Naive thymus-derived CD8-positive, alpha-beta T cell (primary cell): ENCODE measurements at regions of chr1 and their contacts with region 1.

Region 1: DNA sequence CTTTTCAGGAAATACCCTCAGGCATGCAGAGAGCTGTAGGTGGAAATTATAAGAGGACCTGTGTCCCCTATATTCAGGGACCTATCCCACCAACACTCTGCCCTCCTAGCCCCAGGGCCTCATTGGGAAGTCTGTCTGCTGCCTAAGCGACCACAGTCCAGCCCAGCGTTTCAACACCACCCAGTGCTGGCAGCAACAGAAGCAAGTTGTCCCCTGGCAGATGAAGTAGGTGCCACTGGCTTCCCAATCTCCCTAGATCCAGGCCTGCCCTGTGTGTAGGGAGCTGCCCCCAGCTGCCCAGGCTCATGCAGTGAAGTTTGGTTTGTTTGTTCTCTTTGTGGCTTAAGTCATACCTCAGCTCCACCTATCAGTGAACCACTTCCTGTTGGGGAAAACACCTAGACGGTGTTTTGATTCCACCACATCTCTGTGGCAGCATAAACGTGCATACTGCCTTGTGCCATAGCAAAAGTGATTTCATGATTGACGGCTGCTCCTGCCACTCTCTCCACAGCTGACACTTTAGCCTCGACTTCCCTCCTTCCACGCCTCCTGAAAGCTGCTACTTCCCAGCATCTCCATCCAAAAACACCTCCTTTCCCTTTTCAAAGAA is 8.1 kb upstream of the LEFTY1 start:
- DNase-seq: peak; percentile 21 to 92 (median 80)
- ATAC-seq: peak; percentile 88 to 92
- H3K4me3 Mint-ChIP-seq: peak overlapping the region; percentile 59 to 89 (median 82)
- H3K27ac Mint-ChIP-seq: peak overlapping the region; percentile 94 to 100 (median 97)
- H3K4me1 Mint-ChIP-seq: peaks cover 27 to 64% (median 60%) of the 10 kb centered on the region in 4 donors
- H3K27me3 Mint-ChIP-seq: no peaks in the 10 kb centered on the region

Region 2: GRCh38 chr1:225474986-225475820 is 421.8 kb before region 1 on chr1:
- POLR2A ChIA-PET with region 1: interaction called, 13 read pairs
- DNase-seq: peak; percentile 45 to 87 (median 74)
- ATAC-seq: peak; percentile 57 to 78
- H3K4me3 Mint-ChIP-seq: peak overlapping the region in 1 of 10 donors; percentile 45
- H3K27ac Mint-ChIP-seq: peak overlapping the region in 5 of 10 donors; percentile 58 to 83 (median 73)
- H3K4me1 Mint-ChIP-seq: peaks cover 26 to 64% (median 56%) of the 10 kb centered on the region in 4 donors
- H3K27me3 Mint-ChIP-seq: no peaks in the 10 kb centered on the region

Region 3: DNA sequence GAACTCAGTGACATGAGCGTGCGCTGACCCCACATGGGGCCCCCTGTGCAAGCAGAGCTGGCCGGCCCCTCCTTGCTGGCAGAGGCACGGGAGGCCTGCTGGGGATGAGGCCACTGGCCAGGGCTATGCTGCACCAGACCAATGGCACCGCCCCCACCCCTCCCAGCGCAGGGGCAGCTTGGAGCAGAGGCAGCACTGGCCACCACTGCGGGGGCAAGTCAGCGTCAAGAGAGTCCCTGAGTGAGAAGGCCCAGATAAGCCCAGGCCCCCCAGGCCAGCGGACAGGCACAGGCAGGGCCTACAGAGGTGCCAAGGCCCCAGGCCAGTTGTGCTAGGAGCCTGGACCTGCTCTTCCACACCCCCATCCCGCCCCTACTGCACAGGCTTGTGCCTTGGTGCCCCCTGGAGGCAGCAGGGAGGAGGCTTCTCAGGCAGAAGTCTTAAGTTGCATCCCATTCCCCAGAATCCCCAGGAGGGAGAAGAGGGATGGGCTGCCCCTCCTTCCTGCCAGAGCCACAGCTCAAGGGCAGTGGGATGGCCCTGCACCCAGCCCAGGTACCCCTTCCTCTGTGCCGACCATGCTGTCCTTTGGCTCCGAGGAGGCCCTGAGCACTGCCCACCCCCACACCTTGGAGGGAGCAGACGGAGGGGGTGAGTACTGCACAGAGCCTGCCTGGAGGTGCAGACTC is 51.3 kb before region 1 on chr1:
- POLR2A ChIA-PET with region 1: interaction called, 21 read pairs
- DNase-seq: peak in 3 of 10 donors; percentile 30 to 38 (median 35)
- ATAC-seq: no peak
- H3K4me3 Mint-ChIP-seq: peak overlapping the region in 2 of 10 donors; percentile 6 to 19
- H3K27ac Mint-ChIP-seq: peak overlapping the region in 9 of 10 donors; percentile 46 to 96 (median 81)
- H3K4me1 Mint-ChIP-seq: peaks cover 38 to 80% (median 71%) of the 10 kb centered on the region in 4 donors
- H3K27me3 Mint-ChIP-seq: no peaks in the 10 kb centered on the region

Region 4: GRCh38 chr1:225866061-225866837 is 30.8 kb before region 1 on chr1:
- POLR2A ChIA-PET with region 1: interaction called, 526 read pairs
- DNase-seq: peak; percentile 36 to 87 (median 76)
- ATAC-seq: peak; percentile 89 to 94
- H3K4me3 Mint-ChIP-seq: peak overlapping the region; percentile 53 to 82 (median 74)
- H3K27ac Mint-ChIP-seq: peak overlapping the region; percentile 82 to 95 (median 90)
- H3K4me1 Mint-ChIP-seq: peaks cover 22 to 56% (median 44%) of the 10 kb centered on the region in 4 donors
- H3K27me3 Mint-ChIP-seq: no peaks in the 10 kb centered on the region

Region 5: DNA sequence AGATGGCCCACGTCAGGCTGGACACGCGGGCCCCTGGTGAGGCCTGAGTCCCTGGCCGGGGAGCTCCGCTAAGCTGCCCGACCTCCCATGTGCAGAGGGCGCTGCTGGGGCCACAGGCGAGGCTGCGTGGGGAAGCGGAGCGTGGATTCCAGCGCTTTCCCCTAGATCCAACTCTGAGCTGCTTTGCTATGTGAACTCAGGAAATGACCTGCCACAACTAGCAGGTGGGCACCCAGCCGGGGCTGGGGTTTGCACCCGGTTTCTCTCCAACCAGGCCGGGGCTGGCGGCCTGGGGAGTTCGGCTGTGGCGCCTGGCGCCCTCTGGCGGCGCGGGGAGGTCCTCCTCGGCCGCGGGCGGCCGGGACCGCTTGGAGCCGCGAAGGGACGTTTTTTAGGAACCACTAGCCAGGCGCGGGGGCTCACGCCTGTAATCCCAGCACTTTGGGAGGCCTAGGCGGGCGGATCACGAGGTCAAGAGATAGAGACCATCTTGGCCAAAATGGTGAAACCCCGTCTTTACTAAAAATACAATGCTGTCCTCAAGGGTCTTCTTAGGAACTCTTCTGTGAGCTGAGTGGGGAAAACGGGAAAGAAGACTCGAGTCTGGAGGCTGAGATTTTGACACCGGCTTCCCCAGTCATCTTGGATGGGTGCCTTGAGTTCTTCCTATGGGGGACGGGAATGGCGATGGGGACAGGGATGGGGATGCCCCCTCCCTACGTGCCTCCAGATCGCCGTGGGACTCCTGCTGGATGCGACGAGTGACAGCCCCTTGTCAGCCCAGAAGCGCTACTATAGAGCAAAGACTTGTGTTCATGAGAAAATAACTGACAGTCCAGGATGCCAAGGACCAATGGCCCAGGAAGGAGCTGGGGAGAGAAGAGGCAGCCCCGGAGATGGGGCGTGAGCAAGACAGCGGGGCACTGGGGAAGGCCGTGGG is 14.4 kb after region 1 on chr1:
- POLR2A ChIA-PET with region 1: interaction called, 77 read pairs
- DNase-seq: peak; percentile 51 to 85 (median 76)
- ATAC-seq: peak; percentile 94 to 96
- H3K4me3 Mint-ChIP-seq: peak overlapping the region in 5 of 10 donors; percentile 14 to 62 (median 25)
- H3K27ac Mint-ChIP-seq: peak overlapping the region in 9 of 10 donors; percentile 19 to 84 (median 73)
- H3K4me1 Mint-ChIP-seq: peaks cover 25 to 56% (median 39%) of the 10 kb centered on the region in 4 donors
- H3K27me3 Mint-ChIP-seq: no peaks in the 10 kb centered on the region

Region 6: DNA sequence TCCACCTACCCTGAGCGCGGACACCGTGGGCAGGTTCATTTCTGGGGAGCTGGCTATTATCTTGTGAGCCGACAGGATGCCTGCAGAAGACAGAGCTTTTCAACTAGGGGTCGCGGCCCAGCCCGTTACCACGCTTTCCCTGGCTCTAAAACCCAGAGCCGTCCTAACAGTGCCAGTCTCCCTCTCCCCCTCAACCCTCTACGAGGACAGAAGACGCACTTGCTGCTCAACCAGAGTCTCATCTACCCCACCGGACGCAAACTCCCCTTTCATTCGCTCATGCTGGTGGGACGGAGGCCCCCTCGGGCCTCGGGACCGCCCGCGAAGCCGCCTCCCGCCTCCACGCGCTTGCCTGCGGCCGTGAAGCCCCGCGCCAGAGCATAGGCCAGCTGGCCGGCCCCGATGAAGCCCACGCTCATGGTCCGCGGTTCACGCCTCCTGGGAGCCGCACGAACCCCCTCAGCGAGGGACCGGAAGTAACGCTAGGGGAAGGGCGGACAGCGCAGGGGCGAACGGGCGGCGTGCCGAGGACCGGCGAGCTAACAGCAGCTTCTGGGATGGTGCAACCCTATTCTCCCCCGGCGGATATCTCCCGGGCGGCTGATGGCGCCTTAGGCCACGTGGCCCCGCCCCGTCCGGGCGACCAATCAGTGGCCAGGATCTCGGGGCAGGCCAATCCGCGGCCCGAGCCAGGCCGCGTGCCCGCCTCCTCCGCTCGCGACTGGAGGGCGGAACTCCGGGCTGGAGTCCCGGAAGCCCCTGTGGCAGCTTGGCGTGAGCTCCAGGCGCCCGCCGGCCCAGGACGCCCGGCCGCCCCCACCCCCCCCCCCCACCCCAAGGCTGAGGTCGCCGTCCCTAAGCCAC is 26.9 kb after region 1 on chr1 and contains the start of gene PYCR2:
- POLR2A ChIA-PET with region 1: interaction called, 94 read pairs
- DNase-seq: peak; percentile 89 to 95 (median 94)
- ATAC-seq: peak; percentile 95 to 96
- H3K4me3 Mint-ChIP-seq: peak within 1 kb of the TSS; percentile 92 to 98 (median 96)
- H3K27ac Mint-ChIP-seq: peak within 1 kb of the TSS; percentile 91 to 98 (median 96)
- H3K4me1 Mint-ChIP-seq: peaks cover 31 to 72% (median 66%) of the 10 kb centered on the region in 4 donors
- H3K27me3 Mint-ChIP-seq: no peaks in the 10 kb centered on the region
- polyA plus RNA-seq, gene PYCR2: 75.0 to 152 (median 121) TPM